Heart left ventricle (tissue), 16 donors: ENCODE measurements at regions of chr7 and their contacts with region 1.

Region 1: GRCh38 chr7:19421871-19422270 is 276.6 kb upstream of the FERD3L start:
- DNase-seq: no peak
- ATAC-seq: no peak
- H3K4me3 ChIP-seq: no peak overlapping the region
- H3K27ac ChIP-seq: no peak overlapping the region
- H3K4me1 ChIP-seq: no peaks in the 10 kb centered on the region
- H3K27me3 ChIP-seq: no peaks in the 10 kb centered on the region
- CTCF ChIP-seq: no peak
- POLR2A ChIP-seq: no peak

Region 2: DNA sequence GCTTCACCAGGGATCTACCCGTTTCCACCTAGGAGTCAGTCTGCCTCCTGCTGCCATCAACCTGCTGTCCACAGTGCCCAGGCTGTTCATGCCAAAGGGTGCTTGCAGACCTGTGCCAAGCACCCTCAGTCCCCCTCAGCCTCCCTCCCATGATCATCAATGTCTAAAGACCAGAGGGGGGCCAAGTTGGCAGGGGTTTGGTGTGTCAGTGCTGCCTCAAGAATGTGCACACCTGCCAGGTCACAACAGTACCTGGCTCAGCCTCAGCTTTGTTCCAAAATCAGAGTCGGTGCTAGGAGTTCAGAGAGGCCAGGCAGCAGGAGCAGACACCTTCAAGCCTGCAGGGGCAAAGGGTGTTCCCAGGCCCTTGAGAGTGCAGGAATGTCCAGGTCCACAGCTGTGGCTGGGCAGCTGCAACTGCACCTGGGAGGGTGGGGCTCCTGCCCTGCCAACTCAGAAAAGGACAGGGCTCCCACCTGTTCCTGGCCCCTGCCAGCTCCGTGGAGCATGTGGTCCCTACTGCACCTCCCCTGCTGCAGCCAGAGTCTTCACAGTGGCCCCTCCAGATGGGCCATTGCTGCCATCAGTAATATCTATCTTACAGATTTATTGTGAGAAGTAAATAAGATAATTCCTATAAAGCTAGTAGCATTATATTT is 67.4 kb after region 1 on chr7:
- intact Hi-C with region 1: loop called in 1 of 10 experiments (anchors 10 kb)
- DNase-seq: peak in 1 of 5 donors; percentile 46
- ATAC-seq: no peak
- H3K4me3 ChIP-seq: no peak overlapping the region
- H3K27ac ChIP-seq: no peak overlapping the region
- H3K4me1 ChIP-seq: no peaks in the 10 kb centered on the region
- H3K27me3 ChIP-seq: no peaks in the 10 kb centered on the region
- CTCF ChIP-seq: no peak
- POLR2A ChIP-seq: no peak